CD4-positive, alpha-beta T cell (primary cell): ENCODE measurements at regions of chr1 and their contacts with region 1.

Region 1: DNA sequence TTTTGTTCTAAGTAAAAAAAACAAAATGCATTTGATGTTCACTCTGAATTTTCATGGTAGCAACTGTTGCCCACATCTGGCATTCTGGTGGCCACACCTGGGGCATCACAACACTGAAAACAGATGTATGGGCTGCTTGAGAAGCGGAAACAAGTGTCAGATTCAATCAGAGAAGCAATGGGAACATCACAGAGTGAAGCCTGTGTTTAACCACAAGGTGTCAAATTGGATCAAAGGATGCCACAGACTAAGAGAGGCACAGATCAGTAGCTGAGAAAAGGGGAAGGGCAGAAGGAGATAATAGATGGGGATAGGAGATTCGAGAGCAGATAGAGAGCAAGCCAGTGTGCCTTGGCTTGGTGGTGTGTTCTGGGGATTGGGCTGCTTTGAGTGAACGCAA is 49.8 kb upstream of the MTF2 start:
- DNase-seq: peak in 10 of 14 experiments; percentile 9 to 80 (median 36)
- ATAC-seq: peak; percentile 92
- H3K4me3 ChIP-seq: no peak overlapping the region
- H3K4me3 Mint-ChIP-seq: peak overlapping the region; percentile 1
- H3K27ac ChIP-seq: peak overlapping the region in 1 of 2 donors; percentile 32
- H3K27ac Mint-ChIP-seq: peak overlapping the region; percentile 18
- H3K4me1 ChIP-seq: peaks cover 18% of the 10 kb centered on the region
- H3K4me1 Mint-ChIP-seq: peaks cover 30% of the 10 kb centered on the region
- H3K27me3 ChIP-seq: no peaks in the 10 kb centered on the region
- H3K27me3 Mint-ChIP-seq: no peaks in the 10 kb centered on the region
- CTCF ChIP-seq: no peak

Region 2: GRCh38 chr1:93042187-93043056 is 13.1 kb after region 1 on chr1:
- CTCF ChIA-PET with region 1: no interaction called
- POLR2A ChIA-PET with region 1: interaction called, 11 read pairs
- intact Hi-C with region 1: loop called in 1 of 2 experiments (anchors 1 kb)
- DNase-seq: peak in 6 of 14 experiments; percentile 2 to 93 (median 62)
- ATAC-seq: peak; percentile 98
- H3K4me3 ChIP-seq: peak overlapping the region; percentile 45
- H3K4me3 Mint-ChIP-seq: peak overlapping the region; percentile 66
- H3K27ac ChIP-seq: peak overlapping the region; percentile 75 to 85
- H3K27ac Mint-ChIP-seq: peak overlapping the region; percentile 84
- H3K4me1 ChIP-seq: peaks cover 10% of the 10 kb centered on the region
- H3K4me1 Mint-ChIP-seq: peaks cover 16% of the 10 kb centered on the region
- H3K27me3 ChIP-seq: no peaks in the 10 kb centered on the region
- H3K27me3 Mint-ChIP-seq: no peaks in the 10 kb centered on the region
- CTCF ChIP-seq: no peak